ENCODE measurements at regions of chr20 and their contacts with region 1.

Region 1: DNA sequence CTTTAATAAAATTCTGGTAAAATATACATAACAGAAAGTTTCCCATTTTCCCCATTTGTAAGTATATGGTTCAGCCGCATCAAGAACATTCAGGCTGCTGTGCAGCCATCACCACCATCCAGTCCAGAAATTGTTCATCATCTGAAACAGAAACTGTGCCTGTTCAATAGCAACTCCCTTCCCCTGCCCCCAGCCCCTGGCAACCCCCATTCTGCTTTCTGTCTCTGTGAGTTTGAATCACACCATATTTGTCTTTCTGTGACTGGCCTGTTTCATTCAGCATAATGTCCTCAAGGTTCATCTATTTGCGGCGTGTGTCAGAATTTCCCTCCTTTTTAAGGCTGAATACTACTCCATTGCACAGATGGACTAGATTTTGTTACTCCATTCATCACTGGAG is 19.1 kb downstream of the VSTM2L start:
- DNase-seq: peak; percentile 81
- H3K4me3 Mint-ChIP-seq: no peak overlapping the region
- H3K27ac Mint-ChIP-seq: no peak overlapping the region
- H3K4me1 Mint-ChIP-seq: peaks cover 19% of the 10 kb centered on the region
- H3K27me3 Mint-ChIP-seq: peaks cover 28% of the 10 kb centered on the region

Region 2: DNA sequence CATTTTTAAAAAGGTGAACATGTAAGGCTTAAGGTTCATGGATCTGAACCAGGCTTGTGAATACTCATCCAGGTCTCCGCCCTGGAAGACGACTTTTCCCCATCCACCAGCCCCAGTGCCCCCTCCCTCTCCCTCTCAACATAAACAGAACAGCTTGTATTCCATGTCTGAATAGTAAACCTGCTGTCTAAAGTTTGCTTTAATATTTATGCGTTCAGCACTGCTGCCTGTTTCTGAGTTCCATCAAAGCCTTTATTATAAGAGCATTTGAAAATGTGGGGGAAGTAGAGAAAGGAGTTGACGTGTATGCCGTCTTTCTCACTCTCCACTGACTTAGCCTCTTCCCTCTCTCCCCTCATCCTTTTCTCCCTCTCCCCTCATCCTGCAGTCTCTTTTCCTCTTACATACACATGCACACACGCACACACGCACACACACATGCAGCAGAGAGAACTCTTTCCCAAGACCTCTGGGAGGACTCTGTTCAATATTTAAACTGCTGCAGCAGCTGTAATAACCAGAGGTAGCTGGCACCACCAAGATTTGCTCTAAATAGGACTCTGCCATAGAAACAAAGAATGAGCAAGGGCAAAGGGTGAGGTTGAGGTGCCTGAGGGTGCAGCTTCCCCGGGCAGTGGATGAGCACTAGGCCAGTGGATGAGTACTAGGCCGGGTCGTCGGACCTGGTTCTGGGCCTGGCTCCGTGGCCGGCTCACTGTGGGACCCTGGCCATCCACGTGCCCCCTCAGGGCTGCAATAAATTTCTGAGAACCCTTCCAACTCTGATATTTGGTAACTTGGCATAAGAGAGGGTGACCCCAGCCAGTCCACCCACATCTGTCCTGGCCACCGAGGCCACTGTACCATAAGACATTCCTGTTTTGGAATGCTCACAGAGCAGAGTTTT is 54.5 kb before region 1 on chr20:
- CTCF ChIA-PET with region 1: no interaction called
- POLR2A ChIA-PET with region 1: no interaction called
- intact Hi-C with region 1: no loop called
- DNase-seq: no peak
- H3K4me3 Mint-ChIP-seq: no peak overlapping the region
- H3K27ac Mint-ChIP-seq: no peak overlapping the region
- H3K4me1 Mint-ChIP-seq: no peaks in the 10 kb centered on the region
- H3K27me3 Mint-ChIP-seq: no peaks in the 10 kb centered on the region

Region 3: DNA sequence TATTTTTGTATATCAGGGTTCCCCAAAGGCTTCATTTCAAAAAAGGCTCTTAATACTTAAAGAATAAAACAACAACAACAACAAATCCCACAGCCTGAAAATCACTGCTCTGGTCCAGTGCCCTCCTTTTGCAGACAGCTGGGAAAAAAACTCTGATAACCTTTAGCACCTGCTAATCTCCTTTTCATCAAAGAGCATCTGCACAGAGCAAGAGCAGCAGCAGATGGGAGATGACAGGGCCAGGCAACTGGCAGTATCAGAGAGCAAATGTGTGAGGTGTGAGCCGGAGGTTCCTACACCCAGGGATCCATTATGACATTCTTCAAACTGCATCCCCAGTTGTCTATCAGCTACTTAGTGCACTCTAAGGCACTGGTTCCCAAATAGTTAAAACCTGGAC is 85.5 kb after region 1 on chr20:
- CTCF ChIA-PET with region 1: no interaction called
- POLR2A ChIA-PET with region 1: no interaction called
- intact Hi-C with region 1: loop called (anchors 5 kb)
- DNase-seq: no peak
- H3K4me3 Mint-ChIP-seq: no peak overlapping the region
- H3K27ac Mint-ChIP-seq: no peak overlapping the region
- H3K4me1 Mint-ChIP-seq: peaks cover 33% of the 10 kb centered on the region
- H3K27me3 Mint-ChIP-seq: no peaks in the 10 kb centered on the region